Lower leg skin (tissue), 4 donors: ENCODE measurements at regions of chr9 and their contacts with region 1.

Region 1: DNA sequence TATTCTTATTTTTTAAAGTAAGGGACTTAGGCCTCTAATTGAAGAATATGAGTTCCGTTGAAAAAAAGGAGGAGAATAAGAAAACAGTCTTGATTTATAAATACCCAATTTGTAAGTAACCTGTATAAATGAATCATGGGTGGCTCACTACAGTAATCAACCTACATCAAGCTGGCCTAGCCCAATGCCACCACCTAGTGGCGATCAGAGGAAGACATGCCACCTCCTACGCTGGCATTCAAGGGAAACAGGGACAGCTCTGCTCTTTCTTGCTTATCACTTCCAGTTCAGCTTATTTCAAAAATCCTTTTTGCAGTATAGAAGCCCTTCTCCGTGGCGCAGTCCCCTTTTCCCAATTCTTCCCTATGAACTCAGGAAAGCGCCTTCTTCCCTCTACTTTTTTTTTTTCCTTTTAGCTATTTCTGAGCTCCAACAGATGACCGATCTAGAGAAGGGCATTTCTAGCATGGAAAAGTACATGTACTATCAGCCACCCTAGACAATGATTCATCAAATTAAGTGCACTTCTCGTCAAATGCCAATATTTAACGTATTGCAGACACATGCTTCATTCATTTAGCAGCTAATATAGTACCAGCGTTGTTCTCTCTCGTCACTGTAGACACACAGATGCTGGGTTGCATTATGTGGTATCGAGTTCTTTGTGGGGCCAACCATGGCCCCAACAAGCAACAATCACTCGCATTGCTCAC is 28.3 kb downstream of the PTPN3 start:
- DNase-seq: peak in 1 of 2 donors; percentile 75
- H3K4me3 ChIP-seq: no peak overlapping the region
- CTCF ChIP-seq: no peak
- POLR2A ChIP-seq: no peak

Region 2: DNA sequence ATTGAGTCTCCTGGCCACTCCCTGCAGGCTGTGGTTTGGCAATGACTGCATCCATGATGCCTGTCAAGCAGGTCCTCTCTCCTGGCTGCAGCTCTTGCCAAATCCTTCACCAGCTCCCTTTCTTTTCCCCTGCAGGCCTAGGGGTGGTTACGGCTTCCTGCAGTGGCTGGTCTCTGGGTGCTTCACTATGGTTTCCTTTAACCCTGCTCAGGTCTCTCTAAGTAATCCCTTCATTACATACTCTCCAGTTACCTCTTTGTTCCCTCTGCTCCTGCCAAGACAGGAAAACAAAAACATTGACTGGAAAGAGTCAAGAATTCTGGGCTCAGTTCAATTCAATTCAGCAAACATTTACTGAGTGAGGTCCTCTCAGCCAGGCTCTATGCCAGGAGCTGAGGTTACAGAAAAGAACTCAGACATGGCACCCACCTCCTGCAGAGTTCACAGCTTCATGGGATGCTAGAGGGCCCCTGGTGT is 48.1 kb after region 1 on chr9:
- intact Hi-C with region 1: no loop called
- DNase-seq: no peak
- H3K4me3 ChIP-seq: no peak overlapping the region
- CTCF ChIP-seq: no peak
- POLR2A ChIP-seq: no peak

Region 3: DNA sequence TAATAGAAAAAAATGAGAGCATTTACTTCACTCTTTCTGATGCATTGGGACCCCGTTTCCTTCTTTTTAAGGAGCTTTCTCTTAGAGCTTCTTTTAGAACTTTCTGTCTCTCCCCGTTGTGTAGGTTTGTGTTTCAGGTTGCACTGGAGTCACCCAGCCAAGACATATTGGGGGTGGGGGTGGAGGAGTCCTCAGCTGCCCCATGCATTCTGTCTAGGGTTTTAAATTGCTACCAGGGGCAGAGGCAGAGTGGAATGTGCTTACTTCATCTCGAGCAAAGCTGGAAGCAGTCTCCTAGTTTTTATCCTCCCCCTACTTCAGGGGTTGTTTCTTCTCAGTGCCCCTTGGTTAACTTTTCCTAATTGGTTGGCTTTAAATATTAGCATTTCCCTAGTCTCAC is 1850.8 kb after region 1 on chr9:
- intact Hi-C with region 1: loop called (anchors 10 kb)
- DNase-seq: no peak
- H3K4me3 ChIP-seq: no peak overlapping the region
- CTCF ChIP-seq: no peak
- POLR2A ChIP-seq: no peak